Activated CD4-positive, alpha-beta T cell treated with anti-CD3 and anti-CD28 coated beads, Interleukin-2, amount 10 ng/mL, durations not matched to agents 24 days and 14 days (primary cell): ENCODE measurements at regions of chr3 and their contacts with region 1.

Region 1: GRCh38 chr3:8324740-8325139 is 176.9 kb upstream of the LMCD1 start:
- DNase-seq: peak; percentile 83
- H3K4me3 Mint-ChIP-seq: no peak overlapping the region
- H3K27ac Mint-ChIP-seq: no peak overlapping the region
- H3K4me1 Mint-ChIP-seq: no peaks in the 10 kb centered on the region
- H3K27me3 Mint-ChIP-seq: peaks cover 3% of the 10 kb centered on the region

Region 2: GRCh38 chr3:8301728-8302462 is 22.8 kb before region 1 on chr3:
- intact Hi-C with region 1: no loop called
- DNase-seq: peak; percentile 57
- H3K4me3 Mint-ChIP-seq: no peak overlapping the region
- H3K27ac Mint-ChIP-seq: no peak overlapping the region
- H3K4me1 Mint-ChIP-seq: no peaks in the 10 kb centered on the region
- H3K27me3 Mint-ChIP-seq: peaks cover under 1% of the 10 kb centered on the region

Region 3: DNA sequence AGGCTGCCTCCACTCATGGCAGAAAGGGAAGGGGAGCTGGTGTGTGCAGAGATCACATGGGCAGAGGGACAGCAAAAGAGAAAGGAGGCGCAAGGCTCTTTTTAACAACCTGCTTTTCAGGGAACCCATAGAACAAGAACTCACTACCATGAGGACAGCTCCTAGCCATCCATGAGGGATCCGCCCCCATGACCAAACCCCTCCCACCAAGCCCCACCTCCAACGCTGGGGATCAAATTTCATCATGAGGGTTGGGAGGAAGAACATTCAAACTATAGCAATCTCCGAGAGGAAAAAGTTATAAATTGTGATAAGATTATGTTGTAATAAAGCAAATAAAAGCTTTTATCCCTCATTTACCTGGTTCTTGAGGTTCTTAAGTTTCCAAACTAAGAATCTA is 92.2 kb after region 1 on chr3:
- intact Hi-C with region 1: loop called (anchors 1 kb)
- DNase-seq: no peak
- H3K4me3 Mint-ChIP-seq: no peak overlapping the region
- H3K27ac Mint-ChIP-seq: no peak overlapping the region
- H3K4me1 Mint-ChIP-seq: no peaks in the 10 kb centered on the region
- H3K27me3 Mint-ChIP-seq: no peaks in the 10 kb centered on the region